WTC11 (cell line): ENCODE measurements at regions of chr19 and their contacts with region 1.

Region 1: GRCh38 chr19:53942001-53942786 is 20.5 kb upstream of the CACNG8 start:
- DNase-seq: peak; percentile 100
- ATAC-seq: peak; percentile 92
- H3K4me3 Mint-ChIP-seq: peak overlapping the region; percentile 95
- H3K27ac Mint-ChIP-seq: 0 out of 2 replicates have a peak overlapping the region, but pooled peaks have one; percentile 83
- H3K4me1 Mint-ChIP-seq: peaks cover 32% of the 10 kb centered on the region
- H3K27me3 Mint-ChIP-seq: no peaks in the 10 kb centered on the region; the same call in 1 of the 2 replicates
- CTCF ChIP-seq: peak; percentile 88

Region 2: DNA sequence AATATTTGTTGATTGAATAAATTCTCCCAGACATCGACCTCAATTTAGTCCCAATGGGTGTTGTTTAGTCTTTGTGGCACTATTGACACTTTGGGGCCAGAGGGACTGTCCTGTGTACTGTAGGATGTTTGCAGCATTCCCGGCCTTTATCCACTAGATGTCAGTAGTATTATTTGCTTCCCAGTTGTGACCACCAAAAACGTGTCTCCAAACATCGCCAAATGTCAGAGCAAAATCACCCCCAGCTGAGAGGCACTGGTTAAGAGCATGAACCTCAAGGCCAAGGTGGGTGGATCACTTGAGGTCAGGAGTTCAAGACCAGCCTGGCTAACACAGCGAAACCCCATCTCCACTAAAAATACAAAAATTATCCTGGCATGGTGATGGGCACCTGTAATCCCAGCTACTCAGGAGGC is 133.5 kb before region 1 on chr19:
- CTCF ChIA-PET with region 1: interaction called, 34 read pairs
- POLR2A ChIA-PET with region 1: interaction called, 3 read pairs
- DNase-seq: peak; percentile 40
- ATAC-seq: peak; percentile 74
- H3K4me3 Mint-ChIP-seq: no peak overlapping the region
- H3K27ac Mint-ChIP-seq: no peak overlapping the region
- H3K4me1 Mint-ChIP-seq: peaks cover 10% of the 10 kb centered on the region
- H3K27me3 Mint-ChIP-seq: peaks cover 9% of the 10 kb centered on the region
- CTCF ChIP-seq: no peak

Region 3: GRCh38 chr19:53867225-53868090 is 74.7 kb before region 1 on chr19 and contains the start of gene MYADM:
- CTCF ChIA-PET with region 1: interaction called, 40 read pairs
- POLR2A ChIA-PET with region 1: interaction called, 25 read pairs
- DNase-seq: peak; percentile 100
- ATAC-seq: peak; percentile 71
- H3K4me3 Mint-ChIP-seq: peak within 1 kb of the TSS; percentile 93
- H3K27ac Mint-ChIP-seq: peak within 1 kb of the TSS; percentile 99
- H3K4me1 Mint-ChIP-seq: peaks cover 19% of the 10 kb centered on the region
- H3K27me3 Mint-ChIP-seq: peaks cover 5% of the 10 kb centered on the region
- CTCF ChIP-seq: no peak
- total RNA-seq, gene MYADM: 78.6 to 86.4 TPM (median 79.7 TPM) in 3 replicates

Region 4: DNA sequence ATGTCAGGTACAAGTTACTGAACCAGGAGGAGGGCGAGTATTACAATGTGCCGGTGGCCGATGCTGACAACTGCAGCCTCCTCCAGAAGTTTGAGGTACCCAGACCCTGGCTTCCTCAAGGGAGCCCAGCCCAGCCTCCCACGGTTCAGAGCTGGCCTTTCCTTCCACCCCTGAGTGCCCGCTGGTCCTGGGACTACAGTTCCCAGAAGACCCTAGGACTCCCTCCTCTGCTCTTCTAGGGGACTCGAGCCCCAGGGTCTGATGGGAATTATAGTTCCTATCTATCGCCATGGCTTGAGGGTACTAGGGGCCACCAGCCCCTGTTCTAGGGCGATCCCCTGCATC is 49.2 kb before region 1 on chr19:
- CTCF ChIA-PET with region 1: interaction called, 39 read pairs
- POLR2A ChIA-PET with region 1: interaction called, 3 read pairs
- DNase-seq: peak; percentile 69
- ATAC-seq: peak; percentile 61
- H3K4me3 Mint-ChIP-seq: no peak overlapping the region
- H3K27ac Mint-ChIP-seq: peak overlapping the region; percentile 91; the same call in 1 of the 2 replicates
- H3K4me1 Mint-ChIP-seq: peaks cover 35% of the 10 kb centered on the region
- H3K27me3 Mint-ChIP-seq: peaks cover 2% of the 10 kb centered on the region; the same call in 1 of the 2 replicates
- CTCF ChIP-seq: no peak

Region 5: DNA sequence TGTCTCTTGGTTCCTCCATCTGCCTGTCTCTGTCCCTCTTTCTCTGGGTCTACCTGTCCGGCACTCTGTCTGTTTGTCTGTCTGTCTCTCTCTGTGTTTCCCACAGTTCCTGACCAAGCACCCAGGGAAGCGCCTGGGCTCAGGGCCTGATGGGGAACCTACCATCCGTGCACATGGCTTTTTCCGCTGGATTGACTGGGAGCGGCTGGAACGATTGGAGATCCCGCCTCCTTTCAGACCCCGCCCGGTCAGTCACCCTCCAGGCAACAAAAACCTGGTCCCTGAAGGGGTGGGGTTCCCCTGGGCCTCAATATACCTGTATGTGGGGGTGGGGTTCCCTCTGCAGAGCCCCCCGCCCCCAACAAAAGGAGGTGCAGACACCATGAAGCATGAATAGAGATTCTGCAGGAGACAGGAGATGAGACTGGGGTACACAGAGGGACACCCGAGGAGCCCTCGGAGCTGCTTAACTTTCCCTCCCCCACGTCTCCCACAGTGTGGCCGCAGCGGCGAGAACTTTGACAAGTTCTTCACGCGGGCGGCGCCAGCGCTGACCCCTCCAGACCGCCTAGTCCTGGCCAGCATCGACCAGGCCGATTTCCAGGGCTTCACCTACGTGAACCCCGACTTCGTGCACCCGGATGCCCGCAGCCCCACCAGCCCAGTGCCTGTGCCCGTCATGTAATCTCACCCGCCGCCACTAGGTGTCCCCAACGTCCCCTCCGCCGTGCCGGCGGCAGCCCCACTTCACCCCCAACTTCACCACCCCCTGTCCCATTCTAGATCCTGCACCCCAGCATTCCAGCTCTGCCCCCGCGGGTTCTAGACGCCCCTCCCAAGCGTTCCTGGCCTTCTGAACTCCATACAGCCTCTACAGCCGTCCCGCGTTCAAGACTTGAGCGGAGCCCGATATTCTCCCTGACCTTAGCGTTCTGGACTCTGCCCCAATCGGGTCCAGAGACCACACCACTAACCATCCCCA is 35.7 kb before region 1 on chr19:
- CTCF ChIA-PET with region 1: interaction called, 102 read pairs
- POLR2A ChIA-PET with region 1: interaction called, 8 read pairs
- DNase-seq: peak; percentile 89
- ATAC-seq: peak; percentile 15
- H3K4me3 Mint-ChIP-seq: peak overlapping the region; percentile 88
- H3K27ac Mint-ChIP-seq: no peak overlapping the region; the same call in 1 of the 2 replicates
- H3K4me1 Mint-ChIP-seq: peaks cover 34% of the 10 kb centered on the region
- H3K27me3 Mint-ChIP-seq: peaks cover 61% of the 10 kb centered on the region
- CTCF ChIP-seq: peak; percentile 98

Region 6: GRCh38 chr19:53958168-53958571 is 16.0 kb after region 1 on chr19:
- CTCF ChIA-PET with region 1: interaction called, 38 read pairs
- POLR2A ChIA-PET with region 1: interaction called, 8 read pairs
- DNase-seq: peak; percentile 85
- ATAC-seq: peak; percentile 27
- H3K4me3 Mint-ChIP-seq: peak overlapping the region; percentile 79
- H3K27ac Mint-ChIP-seq: peak overlapping the region; percentile 77
- H3K4me1 Mint-ChIP-seq: peaks cover 49% of the 10 kb centered on the region
- H3K27me3 Mint-ChIP-seq: no peaks in the 10 kb centered on the region; the same call in 1 of the 2 replicates
- CTCF ChIP-seq: no peak

Region 7: DNA sequence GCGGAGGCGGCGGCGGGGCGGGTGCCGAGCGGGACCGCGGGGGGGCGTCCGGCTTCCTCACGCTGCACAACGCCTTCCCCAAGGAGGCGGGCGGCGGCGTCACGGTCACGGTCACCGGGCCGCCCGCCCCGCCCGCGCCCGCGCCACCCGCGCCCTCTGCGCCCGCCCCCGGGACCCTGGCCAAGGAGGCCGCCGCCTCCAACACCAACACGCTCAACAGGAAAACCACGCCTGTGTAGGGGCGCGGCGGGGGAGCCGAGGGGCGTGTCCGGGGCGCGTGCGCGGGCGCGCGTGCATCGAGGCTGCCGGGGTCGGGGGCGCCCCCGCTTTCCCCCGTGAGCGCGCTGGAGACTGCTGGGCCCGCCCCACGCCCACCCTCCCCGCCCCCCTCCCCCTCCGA is 40.4 kb after region 1 on chr19:
- CTCF ChIA-PET with region 1: interaction called, 39 read pairs
- POLR2A ChIA-PET with region 1: interaction called, 35 read pairs
- DNase-seq: peak; percentile 62
- ATAC-seq: no peak
- H3K4me3 Mint-ChIP-seq: no peak overlapping the region
- H3K27ac Mint-ChIP-seq: no peak overlapping the region
- H3K4me1 Mint-ChIP-seq: peaks cover 11% of the 10 kb centered on the region
- H3K27me3 Mint-ChIP-seq: peaks cover 4% of the 10 kb centered on the region; the same call in 1 of the 2 replicates
- CTCF ChIP-seq: no peak